Activated CD4-positive, alpha-beta T cell treated with anti-CD3 and anti-CD28 coated beads, Interleukin-2, amount 10 ng/mL, durations not matched to agents 24 days and 14 days (primary cell): ENCODE measurements at regions of chr9 and their contacts with region 1.

Region 1: GRCh38 chr9:35798658-35799374 is 7.4 kb downstream of the NPR2 start:
- DNase-seq: no peak
- H3K4me3 Mint-ChIP-seq: no peak overlapping the region
- H3K27ac Mint-ChIP-seq: peak overlapping the region; percentile 78
- H3K4me1 Mint-ChIP-seq: peaks cover 28% of the 10 kb centered on the region
- H3K27me3 Mint-ChIP-seq: no peaks in the 10 kb centered on the region

Region 2: GRCh38 chr9:35756275-35757225 is 42.3 kb before region 1 on chr9:
- intact Hi-C with region 1: loop called (anchors 5 kb)
- DNase-seq: peak; percentile 94
- H3K4me3 Mint-ChIP-seq: peak overlapping the region; percentile 99
- H3K27ac Mint-ChIP-seq: peak overlapping the region; percentile 98
- H3K4me1 Mint-ChIP-seq: peaks cover 39% of the 10 kb centered on the region
- H3K27me3 Mint-ChIP-seq: no peaks in the 10 kb centered on the region

Region 3: GRCh38 chr9:35774907-35775635 is 23.7 kb before region 1 on chr9:
- intact Hi-C with region 1: no loop called
- DNase-seq: no peak
- H3K4me3 Mint-ChIP-seq: no peak overlapping the region
- H3K27ac Mint-ChIP-seq: no peak overlapping the region
- H3K4me1 Mint-ChIP-seq: peaks cover 8% of the 10 kb centered on the region
- H3K27me3 Mint-ChIP-seq: no peaks in the 10 kb centered on the region